AG04450 (cell line): ENCODE measurements at regions of chr1 and their contacts with region 1.

Region 1: DNA sequence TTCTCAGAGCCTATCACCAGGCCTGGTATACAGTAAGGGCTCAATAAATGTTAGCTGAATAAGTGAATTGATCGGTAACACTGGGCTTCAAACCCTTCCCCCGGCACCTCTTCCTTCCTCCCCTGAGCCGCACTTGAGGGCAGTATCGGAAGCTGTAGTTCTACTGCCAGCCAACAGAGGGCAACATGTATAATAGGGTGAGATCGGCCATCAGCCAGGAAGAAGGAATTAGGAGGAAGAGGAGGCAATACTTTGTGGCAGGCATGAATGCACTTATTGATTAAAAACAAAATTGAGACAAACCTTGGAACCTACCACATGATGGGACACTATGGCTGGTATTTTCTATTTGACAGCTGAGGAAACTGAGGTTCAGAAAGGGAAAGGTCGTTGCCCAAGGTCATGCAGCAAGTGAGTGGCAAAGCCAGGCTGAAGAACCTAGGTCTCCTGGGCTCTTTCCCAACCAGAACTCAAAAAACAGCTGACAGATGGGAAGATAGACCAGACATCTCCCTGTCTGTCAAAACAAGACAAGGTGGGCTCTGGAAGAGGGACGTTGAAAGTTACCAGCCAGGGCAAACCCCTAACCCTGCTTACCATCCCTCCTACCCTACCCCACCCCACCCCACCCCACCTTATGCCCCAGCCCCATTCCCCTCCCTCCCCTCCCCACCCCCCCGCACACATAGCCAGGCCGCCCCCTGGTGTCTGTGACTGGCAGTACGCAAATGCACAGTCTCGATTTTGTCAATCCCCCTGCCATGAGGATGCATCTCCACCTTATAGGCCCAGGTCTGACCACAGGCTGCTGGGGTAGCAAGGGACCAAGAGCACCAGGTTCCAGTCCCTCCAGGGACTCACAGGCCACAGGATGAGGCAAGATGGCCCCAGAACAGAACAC is 107.3 kb upstream of the RUNX3 start:
- DNase-seq: no peak
- H3K4me3 ChIP-seq: no peak overlapping the region
- H3K27ac ChIP-seq: no peak overlapping the region
- H3K27me3 ChIP-seq: peaks cover 5% of the 10 kb centered on the region
- CTCF ChIP-seq: peak; percentile 68

Region 2: DNA sequence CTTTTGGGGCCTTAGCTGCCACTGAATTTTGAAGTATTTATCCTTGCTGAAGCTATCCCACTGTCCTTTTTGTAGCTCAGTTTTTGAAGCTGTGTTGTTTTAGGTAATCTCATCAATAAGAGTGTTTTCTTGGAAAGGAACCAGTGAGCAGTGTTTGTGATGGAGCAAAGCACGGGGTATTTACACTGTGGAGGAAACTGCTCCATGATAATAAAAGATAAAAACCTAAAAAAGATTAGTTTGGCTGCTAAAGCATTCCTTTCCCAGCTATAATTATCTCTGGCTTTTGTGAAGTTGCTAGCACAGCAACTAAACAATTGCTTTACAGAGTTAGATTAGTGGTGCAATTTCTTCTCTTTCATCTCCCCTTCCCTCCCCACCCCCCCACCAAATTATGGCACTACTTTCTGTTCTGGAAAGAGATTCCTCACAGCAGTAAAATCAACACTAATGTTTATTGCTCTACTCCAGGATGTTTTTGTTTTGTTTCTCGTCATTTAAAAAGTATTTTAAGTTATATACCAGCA is 372.9 kb before region 1 on chr1:
- CTCF ChIA-PET with region 1: no interaction called
- POLR2A ChIA-PET with region 1: no interaction called
- DNase-seq: no peak
- H3K4me3 ChIP-seq: no peak overlapping the region
- H3K27ac ChIP-seq: no peak overlapping the region
- H3K27me3 ChIP-seq: no peaks in the 10 kb centered on the region
- CTCF ChIP-seq: no peak

Region 3: GRCh38 chr1:24930204-24931145 is 106.9 kb before region 1 on chr1 and contains the start of gene RUNX3:
- CTCF ChIA-PET with region 1: interaction called, 30 read pairs
- POLR2A ChIA-PET with region 1: no interaction called
- DNase-seq: no peak
- H3K4me3 ChIP-seq: no peak within 1 kb of the TSS
- H3K27ac ChIP-seq: no peak within 1 kb of the TSS
- H3K27me3 ChIP-seq: peaks cover 90% of the 10 kb centered on the region
- CTCF ChIP-seq: no peak
- polyA plus RNA-seq, gene RUNX3: not detected in 2 replicates

Region 4: GRCh38 chr1:25026730-25027450 is 10.5 kb before region 1 on chr1:
- CTCF ChIA-PET with region 1: interaction called, 17 read pairs
- POLR2A ChIA-PET with region 1: no interaction called
- DNase-seq: no peak
- H3K4me3 ChIP-seq: no peak overlapping the region
- H3K27ac ChIP-seq: no peak overlapping the region
- H3K27me3 ChIP-seq: peaks cover 23% of the 10 kb centered on the region
- CTCF ChIP-seq: no peak